ENCODE measurements at regions of chr5 and their contacts with region 1.

Region 1: DNA sequence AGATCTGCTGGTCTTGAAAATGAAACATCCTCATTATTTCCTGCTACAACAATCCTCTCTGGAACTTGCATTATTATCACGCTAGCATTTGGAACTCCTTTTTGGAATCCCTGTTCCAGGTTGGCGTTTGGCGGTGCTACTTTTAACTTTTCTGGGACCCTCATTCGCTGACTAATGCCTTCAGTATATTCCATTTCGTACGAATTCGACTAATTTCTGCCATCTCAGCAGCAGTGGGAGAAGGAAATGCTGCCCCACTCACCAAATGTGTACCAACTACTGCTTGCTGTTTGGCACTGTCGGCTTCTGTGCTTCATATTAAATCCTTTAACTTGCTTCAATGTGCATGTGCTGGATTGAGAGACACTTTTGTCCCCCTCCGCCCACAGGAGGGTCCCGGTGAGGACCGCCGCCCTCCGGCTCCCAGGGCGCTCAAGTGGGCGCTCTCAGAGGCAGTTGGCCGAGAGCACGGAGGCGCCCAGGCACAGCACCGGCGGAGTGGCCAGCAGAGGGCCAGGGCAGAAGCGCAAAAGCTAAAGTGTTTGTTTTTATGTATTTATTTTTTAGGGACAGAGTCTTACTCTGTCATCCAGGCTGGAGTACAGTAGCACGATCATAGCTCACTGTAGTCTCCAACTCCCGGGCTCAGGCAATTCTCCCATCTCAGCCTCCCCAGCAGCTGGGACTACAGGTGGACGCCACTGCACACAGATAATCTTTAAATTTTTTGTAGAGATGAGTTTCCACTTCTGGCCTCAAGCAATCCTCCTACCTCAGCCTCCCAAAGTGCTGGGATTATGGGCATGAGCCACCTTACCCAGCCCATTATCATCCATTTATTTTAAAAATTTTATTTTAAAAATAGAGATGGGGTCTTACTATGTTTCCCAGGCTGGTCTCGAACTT is 11.9 kb downstream of the PDE6A start:
- DNase-seq: no peak
- H3K4me3 Mint-ChIP-seq: no peak overlapping the region
- H3K27ac Mint-ChIP-seq: no peak overlapping the region
- H3K4me1 Mint-ChIP-seq: peaks cover 51% of the 10 kb centered on the region
- H3K27me3 Mint-ChIP-seq: no peaks in the 10 kb centered on the region
- CTCF ChIP-seq: no peak

Region 2: GRCh38 chr5:149860801-149861322 is 71.8 kb before region 1 on chr5:
- CTCF ChIA-PET with region 1: interaction called, 5 read pairs
- POLR2A ChIA-PET with region 1: interaction called, 12 read pairs
- intact Hi-C with region 1: no loop called
- DNase-seq: peak; percentile 94
- H3K4me3 Mint-ChIP-seq: no peak overlapping the region
- H3K27ac Mint-ChIP-seq: peak overlapping the region; percentile 21
- H3K4me1 Mint-ChIP-seq: peaks cover 38% of the 10 kb centered on the region
- H3K27me3 Mint-ChIP-seq: no peaks in the 10 kb centered on the region
- CTCF ChIP-seq: no peak

Region 3: GRCh38 chr5:149913436-149914419 is 19.0 kb before region 1 on chr5:
- CTCF ChIA-PET with region 1: interaction called, 24 read pairs
- POLR2A ChIA-PET with region 1: interaction called, 96 read pairs
- intact Hi-C with region 1: no loop called
- DNase-seq: no peak
- H3K4me3 Mint-ChIP-seq: no peak overlapping the region
- H3K27ac Mint-ChIP-seq: no peak overlapping the region
- H3K4me1 Mint-ChIP-seq: peaks cover 57% of the 10 kb centered on the region
- H3K27me3 Mint-ChIP-seq: no peaks in the 10 kb centered on the region
- CTCF ChIP-seq: no peak